ENCODE measurements at regions of chr2 and their contacts with region 1.

Region 1: GRCh38 chr2:17672583-17673317 is 80.9 kb downstream of the SMC6 start:
- DNase-seq: no peak
- H3K4me3 ChIP-seq: no peak overlapping the region
- H3K27ac ChIP-seq: no peak overlapping the region
- H3K27me3 ChIP-seq: no peaks in the 10 kb centered on the region
- CTCF ChIP-seq: no peak

Region 2: GRCh38 chr2:17309741-17310339 is 362.9 kb before region 1 on chr2:
- CTCF ChIA-PET with region 1: interaction called, 36 read pairs
- POLR2A ChIA-PET with region 1: no interaction called
- DNase-seq: no peak
- H3K4me3 ChIP-seq: no peak overlapping the region
- H3K27ac ChIP-seq: no peak overlapping the region
- H3K27me3 ChIP-seq: peaks cover 2% of the 10 kb centered on the region
- CTCF ChIP-seq: peak; percentile 81

Region 3: DNA sequence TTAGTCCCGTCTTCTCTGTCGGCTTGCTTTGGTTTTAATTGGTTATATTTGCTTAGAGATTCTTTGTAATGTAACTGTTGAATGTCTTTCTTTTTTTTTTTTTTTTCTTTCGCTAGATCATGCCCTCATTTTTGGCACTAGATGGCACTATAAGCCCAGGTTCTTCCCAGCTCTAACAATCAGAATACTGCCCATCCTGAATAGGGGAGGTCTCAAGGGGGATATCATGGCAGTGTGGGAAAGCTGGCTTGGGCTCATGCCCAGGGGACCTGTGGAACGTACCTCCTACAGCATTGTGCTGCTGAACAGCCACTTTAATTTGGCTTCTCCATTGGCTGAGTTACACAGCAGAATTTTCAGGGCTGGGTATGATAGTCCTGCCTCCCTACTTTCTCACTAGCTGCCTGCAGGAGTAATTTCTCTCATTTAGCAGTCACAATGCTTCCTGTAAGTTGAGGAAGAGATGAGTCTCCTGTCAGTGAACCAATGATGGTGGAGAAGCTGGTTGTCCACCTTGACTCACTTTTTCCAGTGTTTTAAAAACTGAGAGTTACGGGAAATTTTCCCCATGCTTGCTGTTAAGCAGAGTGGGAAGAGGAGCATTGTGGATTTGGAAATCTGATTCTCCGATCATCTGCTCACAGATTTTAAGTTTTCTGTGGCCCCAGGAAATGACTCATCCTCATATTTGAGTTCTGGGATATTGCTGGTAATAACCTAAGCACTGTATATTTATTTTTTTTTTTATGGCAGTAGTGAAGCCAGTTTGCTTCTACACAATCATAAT is 201.7 kb before region 1 on chr2:
- CTCF ChIA-PET with region 1: interaction called, 123 read pairs
- POLR2A ChIA-PET with region 1: no interaction called
- DNase-seq: peak; percentile 30
- H3K4me3 ChIP-seq: no peak overlapping the region
- H3K27ac ChIP-seq: peak overlapping the region; percentile 58
- H3K27me3 ChIP-seq: no peaks in the 10 kb centered on the region
- CTCF ChIP-seq: peak; percentile 60

Region 4: DNA sequence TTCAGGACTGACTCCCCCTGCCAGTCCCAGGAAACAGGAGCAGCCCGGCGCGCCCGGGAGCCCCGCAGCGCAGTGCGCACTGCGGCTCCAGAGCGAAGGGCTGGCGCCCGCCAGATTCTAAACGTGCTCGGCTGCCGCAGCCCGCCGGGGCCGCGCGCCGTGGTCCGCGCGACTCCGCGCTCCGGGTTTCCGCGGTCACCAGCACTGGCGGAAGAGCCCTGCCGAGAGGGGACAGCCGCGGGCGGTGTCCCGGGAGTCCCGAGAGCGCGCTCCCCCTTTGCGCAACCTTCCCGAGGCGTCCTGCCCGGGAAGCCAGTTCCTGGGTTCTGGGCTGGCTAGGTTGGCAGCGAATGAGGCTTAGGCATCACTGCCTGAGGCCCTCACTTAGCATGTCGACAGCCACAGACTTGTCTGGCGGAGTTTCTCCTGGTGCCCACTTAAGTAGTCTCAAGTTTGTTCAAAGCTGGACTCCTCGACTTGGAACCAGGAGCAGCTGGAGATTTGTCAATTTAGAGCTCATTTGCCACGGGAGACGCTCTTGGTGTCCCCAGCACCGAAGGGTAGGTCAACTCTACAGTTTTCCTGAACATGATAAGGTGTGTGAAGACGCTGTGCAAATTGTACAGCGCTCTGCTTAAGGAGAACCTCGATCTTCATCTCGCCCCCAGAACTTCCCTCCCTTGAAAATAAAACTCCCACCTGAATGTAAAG is 133.8 kb before region 1 on chr2:
- CTCF ChIA-PET with region 1: interaction called, 30 read pairs
- POLR2A ChIA-PET with region 1: no interaction called
- DNase-seq: no peak
- H3K4me3 ChIP-seq: peak overlapping the region; percentile 65
- H3K27ac ChIP-seq: no peak overlapping the region
- H3K27me3 ChIP-seq: peaks cover 17% of the 10 kb centered on the region
- CTCF ChIP-seq: no peak

Region 5: DNA sequence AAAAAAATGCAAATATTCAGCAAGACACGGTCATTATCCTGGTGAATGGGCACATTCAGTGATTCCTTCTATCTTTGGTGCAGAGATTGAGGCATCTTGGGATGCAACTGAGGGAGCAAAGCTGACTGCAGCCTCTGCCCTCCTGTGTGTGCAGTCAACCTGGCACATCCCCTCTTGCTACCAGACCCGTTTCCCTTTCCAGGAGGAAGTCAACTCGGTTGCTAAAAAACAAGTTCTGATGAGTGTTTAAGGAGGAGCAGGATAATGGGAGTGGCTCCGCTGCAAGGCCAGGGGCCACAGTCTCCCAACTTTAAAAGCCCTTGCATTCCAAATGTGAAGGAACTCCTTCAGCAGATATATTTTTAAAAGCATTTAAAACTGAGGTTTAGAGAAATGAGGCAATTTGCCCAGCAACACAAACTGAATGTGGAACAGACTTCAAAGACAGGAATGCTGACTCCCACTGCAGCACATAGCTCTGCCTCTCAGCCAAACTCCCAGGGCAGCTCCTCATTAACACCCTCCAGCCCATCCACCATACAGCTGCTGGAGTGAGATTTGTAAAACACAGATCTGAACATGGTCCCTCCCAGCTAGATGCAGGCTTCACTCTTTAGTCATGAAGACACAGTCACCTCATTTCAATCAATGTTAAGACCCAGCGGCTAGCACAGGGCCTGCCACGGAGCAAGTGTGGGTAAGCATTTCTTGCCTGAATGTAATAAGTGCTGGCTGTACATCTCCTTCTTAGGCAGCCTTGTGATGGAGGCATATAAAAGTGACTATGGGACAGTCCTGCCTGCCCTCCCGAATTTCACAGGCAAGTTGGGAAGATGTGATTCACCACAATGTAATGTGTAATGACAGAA is 78.0 kb before region 1 on chr2:
- CTCF ChIA-PET with region 1: interaction called, 10 read pairs
- POLR2A ChIA-PET with region 1: no interaction called
- DNase-seq: no peak
- H3K4me3 ChIP-seq: no peak overlapping the region
- H3K27ac ChIP-seq: peak overlapping the region; percentile 40
- H3K27me3 ChIP-seq: no peaks in the 10 kb centered on the region
- CTCF ChIP-seq: no peak

Region 6: GRCh38 chr2:17652681-17653394 is 19.9 kb before region 1 on chr2:
- CTCF ChIA-PET with region 1: interaction called, 118 read pairs
- POLR2A ChIA-PET with region 1: no interaction called
- DNase-seq: no peak
- H3K4me3 ChIP-seq: no peak overlapping the region
- H3K27ac ChIP-seq: no peak overlapping the region
- H3K27me3 ChIP-seq: no peaks in the 10 kb centered on the region
- CTCF ChIP-seq: no peak

Region 7: DNA sequence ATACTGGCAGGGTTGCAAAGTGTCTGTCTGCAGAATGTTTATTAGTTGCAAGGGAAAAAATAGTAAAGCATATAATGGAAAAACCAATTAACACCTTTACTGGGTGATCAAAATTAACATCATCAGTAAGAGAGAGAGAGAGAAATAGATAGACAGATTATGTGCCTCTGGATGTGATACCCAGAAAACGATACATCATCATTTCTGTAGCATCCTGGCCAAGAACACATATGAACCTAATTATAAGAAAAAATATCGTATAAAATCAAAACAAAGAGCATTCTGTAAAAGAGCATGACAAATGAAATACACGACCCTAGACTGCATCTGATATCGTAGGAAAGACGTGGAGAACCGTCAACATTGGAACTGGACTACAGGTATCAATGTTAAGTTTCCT is 16.3 kb after region 1 on chr2:
- CTCF ChIA-PET with region 1: interaction called, 25 read pairs
- POLR2A ChIA-PET with region 1: no interaction called
- DNase-seq: no peak
- H3K4me3 ChIP-seq: no peak overlapping the region
- H3K27ac ChIP-seq: no peak overlapping the region
- H3K27me3 ChIP-seq: no peaks in the 10 kb centered on the region
- CTCF ChIP-seq: no peak

Region 8: GRCh38 chr2:17892770-17893534 is 220.2 kb after region 1 on chr2:
- CTCF ChIA-PET with region 1: no interaction called
- POLR2A ChIA-PET with region 1: no interaction called
- DNase-seq: no peak
- H3K4me3 ChIP-seq: no peak overlapping the region
- H3K27ac ChIP-seq: no peak overlapping the region
- H3K27me3 ChIP-seq: no peaks in the 10 kb centered on the region
- CTCF ChIP-seq: no peak